CD4-positive, alpha-beta memory T cell (primary cell): ENCODE measurements at regions of chr6 and their contacts with region 1.

Region 1: GRCh38 chr6:12011276-12012076 is 636 bp upstream of the HIVEP1 start:
- DNase-seq: peak; percentile 92 to 99 (median 96)
- H3K4me3 ChIP-seq: no peak overlapping the region
- H3K4me3 Mint-ChIP-seq: peak overlapping the region; percentile 85 to 96 (median 92)
- H3K27ac ChIP-seq: no peak overlapping the region
- H3K27ac Mint-ChIP-seq: peak overlapping the region; percentile 94 to 100 (median 97)
- H3K4me1 ChIP-seq: peaks cover 37% of the 10 kb centered on the region
- H3K4me1 Mint-ChIP-seq: peaks cover 30 to 62% (median 46%) of the 10 kb centered on the region in 4 donors
- H3K27me3 ChIP-seq: no peaks in the 10 kb centered on the region
- H3K27me3 Mint-ChIP-seq: peaks cover 0 to 3% of the 10 kb centered on the region in 2 donors

Region 2: DNA sequence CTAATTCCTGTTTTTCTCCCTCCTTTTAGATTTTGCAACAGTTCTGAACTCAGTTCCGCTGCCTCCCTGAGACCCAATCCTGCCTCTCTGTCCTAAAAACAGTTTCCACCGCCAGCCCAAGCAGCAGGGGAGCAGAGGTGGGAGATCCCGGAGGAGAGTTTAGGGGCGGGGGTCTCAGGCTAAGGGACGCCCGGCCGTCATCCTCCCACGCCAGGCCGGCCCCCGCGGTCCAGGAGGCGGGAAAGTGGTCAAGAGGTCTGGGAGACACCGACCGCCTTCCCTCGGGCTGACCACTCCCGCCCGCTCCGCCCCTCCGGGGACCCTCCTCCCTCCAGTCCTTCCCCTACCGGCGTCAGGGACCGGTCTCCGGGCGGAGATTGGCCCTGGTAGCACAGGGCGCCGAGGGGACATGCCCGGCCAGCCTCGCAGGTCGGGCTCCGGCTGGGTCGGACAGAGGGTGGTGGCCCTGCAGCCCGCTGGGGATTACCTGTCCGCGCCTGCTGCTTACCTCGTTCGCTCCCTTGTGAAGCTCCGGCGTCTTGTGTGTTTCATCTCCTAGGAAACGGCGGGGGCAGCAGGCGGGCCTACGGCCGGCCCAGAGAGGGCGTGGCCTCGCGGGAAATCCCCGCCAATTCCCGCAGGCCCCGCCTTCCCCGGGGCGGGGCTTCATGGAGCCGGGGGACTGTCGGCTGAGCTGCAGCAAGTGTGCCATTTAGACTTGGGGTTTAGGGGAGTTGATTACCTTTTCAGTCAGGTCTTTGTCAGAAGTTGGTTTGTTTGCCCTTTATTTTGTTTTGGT is 1173.3 kb before region 1 on chr6 and contains the start of gene MAK:
- CTCF ChIA-PET with region 1: no interaction called
- POLR2A ChIA-PET with region 1: no interaction called
- intact Hi-C with region 1: loop called (anchors 5 kb)
- DNase-seq: peak; percentile 89 to 91 (median 90)
- H3K4me3 ChIP-seq: peak within 1 kb of the TSS; percentile 5 to 44
- H3K4me3 Mint-ChIP-seq: peak within 1 kb of the TSS; percentile 79 to 92 (median 84)
- H3K27ac ChIP-seq: peak within 1 kb of the TSS; percentile 22
- H3K27ac Mint-ChIP-seq: peak within 1 kb of the TSS; percentile 36 to 90 (median 82)
- H3K4me1 ChIP-seq: peaks cover 25% of the 10 kb centered on the region
- H3K4me1 Mint-ChIP-seq: peaks cover 7 to 26% (median 20%) of the 10 kb centered on the region in 4 donors
- H3K27me3 ChIP-seq: peaks cover 41% of the 10 kb centered on the region
- H3K27me3 Mint-ChIP-seq: peaks cover 37 to 51% of the 10 kb centered on the region in 2 donors
- total RNA-seq, gene MAK: not detected

Region 3: GRCh38 chr6:11700118-11700718 is 311.3 kb before region 1 on chr6:
- CTCF ChIA-PET with region 1: no interaction called
- POLR2A ChIA-PET with region 1: no interaction called
- intact Hi-C with region 1: loop called (anchors 2 kb)
- DNase-seq: peak in 3 of 5 donors; percentile 38 to 51 (median 42)
- H3K4me3 ChIP-seq: no peak overlapping the region
- H3K4me3 Mint-ChIP-seq: no peak overlapping the region
- H3K27ac ChIP-seq: no peak overlapping the region
- H3K27ac Mint-ChIP-seq: peak overlapping the region in 1 of 7 donors; percentile 41
- H3K4me1 ChIP-seq: no peaks in the 10 kb centered on the region
- H3K4me1 Mint-ChIP-seq: peaks cover 0 to 8% (median 4%) of the 10 kb centered on the region in 4 donors
- H3K27me3 ChIP-seq: no peaks in the 10 kb centered on the region
- H3K27me3 Mint-ChIP-seq: no peaks in the 10 kb centered on the region

Region 4: DNA sequence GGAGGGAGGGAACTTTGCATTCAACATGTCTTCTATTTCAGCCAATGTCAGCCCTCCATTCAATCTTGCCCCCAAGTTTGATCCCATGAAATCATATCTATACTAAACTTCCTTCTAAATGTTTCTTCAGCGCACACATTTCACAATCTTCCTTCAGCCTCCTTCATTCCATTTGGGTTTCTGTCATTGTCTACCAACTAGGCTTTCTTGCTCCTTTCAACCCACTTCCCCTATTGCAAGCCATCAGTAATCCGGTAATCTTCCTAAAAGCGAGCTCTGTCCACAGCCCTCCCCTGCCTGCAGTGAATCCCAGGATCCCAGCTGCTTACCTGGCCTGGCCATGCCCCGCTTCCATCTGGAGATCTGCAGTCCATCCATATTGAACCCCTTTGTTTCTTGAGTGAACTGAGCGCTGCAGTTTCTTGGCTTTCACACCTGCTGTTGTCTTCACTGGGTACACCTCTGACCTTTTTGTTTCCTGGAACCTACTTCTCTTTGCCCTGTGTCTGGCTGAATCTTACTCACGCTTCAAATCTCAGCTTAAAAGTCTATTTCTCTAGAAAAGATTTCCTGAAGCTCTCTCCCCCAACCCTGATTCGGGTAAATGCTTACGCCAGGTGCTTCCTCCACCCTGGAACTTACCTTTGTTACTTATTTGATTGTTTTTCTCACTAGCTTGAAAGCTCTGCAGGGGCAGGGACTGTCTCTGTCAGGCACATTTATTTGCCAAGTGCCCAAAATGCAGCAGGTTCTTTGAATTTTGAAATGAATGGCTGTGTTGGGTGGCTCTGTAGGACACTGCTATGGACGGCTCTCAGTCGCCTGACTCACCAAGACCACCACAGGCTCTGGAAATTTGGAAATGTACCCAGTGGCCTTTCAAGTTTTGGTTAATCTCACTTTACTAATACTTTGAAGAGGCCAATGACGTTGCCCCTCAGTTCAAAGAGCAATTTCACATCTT is 283.2 kb before region 1 on chr6:
- CTCF ChIA-PET with region 1: interaction called, 4 read pairs
- POLR2A ChIA-PET with region 1: interaction called, 15 read pairs
- intact Hi-C with region 1: loop called (anchors 2 kb)
- DNase-seq: peak in 4 of 5 donors; percentile 29 to 51 (median 37)
- H3K4me3 ChIP-seq: peak overlapping the region in 1 of 2 donors; percentile 32
- H3K4me3 Mint-ChIP-seq: peak overlapping the region; percentile 48 to 91 (median 84)
- H3K27ac ChIP-seq: peak overlapping the region; percentile 54
- H3K27ac Mint-ChIP-seq: peak overlapping the region; percentile 78 to 97 (median 91)
- H3K4me1 ChIP-seq: peaks cover 60% of the 10 kb centered on the region
- H3K4me1 Mint-ChIP-seq: peaks cover 52 to 76% (median 57%) of the 10 kb centered on the region in 4 donors
- H3K27me3 ChIP-seq: no peaks in the 10 kb centered on the region
- H3K27me3 Mint-ChIP-seq: peaks cover 0 to 3% of the 10 kb centered on the region in 2 donors

Region 5: GRCh38 chr6:11848852-11849731 is 162.4 kb before region 1 on chr6:
- CTCF ChIA-PET with region 1: no interaction called
- POLR2A ChIA-PET with region 1: no interaction called
- intact Hi-C with region 1: no loop called
- DNase-seq: no peak
- H3K4me3 ChIP-seq: no peak overlapping the region
- H3K4me3 Mint-ChIP-seq: no peak overlapping the region
- H3K27ac ChIP-seq: no peak overlapping the region
- H3K27ac Mint-ChIP-seq: no peak overlapping the region
- H3K4me1 ChIP-seq: no peaks in the 10 kb centered on the region
- H3K4me1 Mint-ChIP-seq: peaks cover 0 to 1% (median 0%) of the 10 kb centered on the region in 4 donors
- H3K27me3 ChIP-seq: no peaks in the 10 kb centered on the region
- H3K27me3 Mint-ChIP-seq: peaks cover 0 to 2% of the 10 kb centered on the region in 2 donors

Region 6: GRCh38 chr6:12051861-12052368 is 40.4 kb after region 1 on chr6:
- CTCF ChIA-PET with region 1: no interaction called
- POLR2A ChIA-PET with region 1: interaction called, 8 read pairs
- intact Hi-C with region 1: loop called (anchors 2 kb)
- DNase-seq: peak; percentile 68 to 86 (median 69)
- H3K4me3 ChIP-seq: no peak overlapping the region
- H3K4me3 Mint-ChIP-seq: peak overlapping the region; percentile 18 to 77 (median 64)
- H3K27ac ChIP-seq: peak overlapping the region; percentile 28
- H3K27ac Mint-ChIP-seq: peak overlapping the region; percentile 73 to 96 (median 92)
- H3K4me1 ChIP-seq: peaks cover 33% of the 10 kb centered on the region
- H3K4me1 Mint-ChIP-seq: peaks cover 27 to 73% (median 47%) of the 10 kb centered on the region in 4 donors
- H3K27me3 ChIP-seq: no peaks in the 10 kb centered on the region
- H3K27me3 Mint-ChIP-seq: no peaks in the 10 kb centered on the region

Region 7: GRCh38 chr6:12233693-12234571 is 222.5 kb after region 1 on chr6:
- CTCF ChIA-PET with region 1: interaction called, 13 read pairs
- POLR2A ChIA-PET with region 1: interaction called, 5 read pairs
- intact Hi-C with region 1: loop called (anchors 10 kb)
- DNase-seq: peak; percentile 56 to 71 (median 63)
- H3K4me3 ChIP-seq: no peak overlapping the region
- H3K4me3 Mint-ChIP-seq: peak overlapping the region in 6 of 8 donors; percentile 19 to 55 (median 38)
- H3K27ac ChIP-seq: no peak overlapping the region
- H3K27ac Mint-ChIP-seq: peak overlapping the region; percentile 1 to 86 (median 51)
- H3K4me1 ChIP-seq: peaks cover 19% of the 10 kb centered on the region
- H3K4me1 Mint-ChIP-seq: peaks cover 21 to 22% (median 22%) of the 10 kb centered on the region in 4 donors
- H3K27me3 ChIP-seq: no peaks in the 10 kb centered on the region
- H3K27me3 Mint-ChIP-seq: no peaks in the 10 kb centered on the region

Region 8: DNA sequence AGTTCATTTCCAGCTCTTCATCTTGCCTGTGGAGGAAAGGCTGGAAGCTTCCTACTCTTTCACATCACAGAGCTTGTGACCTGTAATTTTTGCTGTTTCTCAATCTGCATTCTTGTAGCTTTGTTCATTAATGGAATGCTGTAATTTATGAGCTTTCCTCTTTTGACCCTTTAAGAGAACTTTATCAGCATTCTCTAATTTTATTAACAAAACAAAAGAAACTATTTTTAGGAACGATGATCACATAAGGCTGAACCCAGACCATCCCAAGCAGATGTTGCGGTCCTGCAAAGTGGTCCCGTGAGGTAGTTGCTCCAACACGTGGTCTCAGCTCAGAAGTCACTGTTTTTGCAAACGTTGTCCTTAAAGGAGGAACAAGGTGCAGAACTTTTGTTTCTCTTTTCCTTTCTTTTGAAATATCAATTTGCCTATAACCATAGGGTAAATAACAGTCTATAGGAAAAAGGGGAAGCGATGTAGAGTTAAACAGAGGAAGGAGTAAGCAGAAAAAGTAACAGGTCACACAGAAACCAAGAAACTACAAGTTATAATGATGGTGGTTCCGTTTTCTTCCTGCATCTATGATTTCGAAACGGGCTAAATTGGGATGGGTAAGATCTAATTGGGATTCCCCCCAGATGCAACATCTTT is 583.8 kb after region 1 on chr6:
- CTCF ChIA-PET with region 1: no interaction called
- POLR2A ChIA-PET with region 1: no interaction called
- intact Hi-C with region 1: no loop called
- DNase-seq: no peak
- H3K4me3 ChIP-seq: no peak overlapping the region
- H3K4me3 Mint-ChIP-seq: no peak overlapping the region
- H3K27ac ChIP-seq: no peak overlapping the region
- H3K27ac Mint-ChIP-seq: no peak overlapping the region
- H3K4me1 ChIP-seq: no peaks in the 10 kb centered on the region
- H3K4me1 Mint-ChIP-seq: peaks cover 0 to 1% (median 0%) of the 10 kb centered on the region in 4 donors
- H3K27me3 ChIP-seq: no peaks in the 10 kb centered on the region
- H3K27me3 Mint-ChIP-seq: peaks cover 0 to 6% of the 10 kb centered on the region in 2 donors